ENCODE measurements at regions of chrX and their contacts with region 1.

Region 1: DNA sequence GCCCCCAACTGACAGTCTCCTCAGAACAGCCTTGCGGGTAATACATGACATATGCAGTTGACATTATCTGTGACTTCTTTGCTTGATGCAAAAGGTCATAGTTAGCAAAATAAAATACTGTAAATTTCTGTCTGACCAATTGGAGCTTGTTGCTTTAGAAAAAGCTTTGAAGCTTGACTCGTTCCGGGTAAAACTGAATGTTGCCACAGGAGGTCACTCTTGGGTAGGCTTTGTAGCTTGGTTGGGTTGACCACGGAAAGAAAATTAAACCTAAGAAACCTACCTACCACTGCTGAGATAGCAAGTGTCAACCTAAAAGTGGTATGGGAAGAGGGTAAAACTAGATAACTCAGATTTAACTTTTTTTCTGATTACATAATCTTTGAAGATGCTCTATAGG is 23.2 kb downstream of the PRPS2 start:
- DNase-seq: peak in 6 of 9 experiments; percentile 12 to 62 (median 30)
- ATAC-seq: peak; percentile 58
- H3K4me3 ChIP-seq: no peak overlapping the region
- H3K4me3 Mint-ChIP-seq: no peak overlapping the region
- H3K27ac ChIP-seq: no peak overlapping the region
- H3K27ac Mint-ChIP-seq: no peak overlapping the region
- H3K4me1 ChIP-seq: no peaks in the 10 kb centered on the region
- H3K4me1 Mint-ChIP-seq: no peaks in the 10 kb centered on the region
- H3K27me3 ChIP-seq: no peaks in the 10 kb centered on the region
- H3K27me3 Mint-ChIP-seq: no peaks in the 10 kb centered on the region
- CTCF ChIP-seq: peak; percentile 28

Region 2: DNA sequence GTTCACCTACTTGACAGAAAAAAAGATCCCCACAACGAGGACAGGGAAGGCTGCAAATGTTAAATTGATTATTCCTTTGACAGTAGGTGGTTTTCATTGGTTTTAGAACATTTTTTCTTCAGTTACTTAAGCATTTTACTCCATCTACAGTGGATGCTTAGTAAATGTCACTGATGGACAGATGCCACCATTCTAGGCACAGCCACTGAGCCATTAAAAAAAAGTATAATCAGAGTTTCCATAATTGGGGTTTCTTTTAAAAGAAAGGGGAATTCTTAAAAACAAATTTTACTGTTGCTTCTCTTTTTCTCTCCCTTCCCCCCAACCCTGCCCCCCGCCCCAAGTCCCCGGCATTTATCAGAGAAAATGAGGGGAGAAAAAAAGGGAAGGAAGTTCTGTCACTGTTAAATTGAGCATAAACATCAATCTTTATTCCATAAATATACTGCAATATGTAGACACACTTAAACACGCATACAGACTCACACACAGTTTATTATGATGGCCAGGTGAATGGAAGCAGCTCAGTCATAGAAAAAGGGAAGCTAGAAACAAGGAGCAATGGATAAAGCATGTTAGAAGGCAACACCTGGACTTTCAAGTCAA is 102.9 kb before region 1 on chrX:
- CTCF ChIA-PET with region 1: no interaction called
- POLR2A ChIA-PET with region 1: no interaction called
- intact Hi-C with region 1: no loop called
- DNase-seq: no peak
- ATAC-seq: no peak
- H3K4me3 ChIP-seq: no peak overlapping the region
- H3K4me3 Mint-ChIP-seq: no peak overlapping the region
- H3K27ac ChIP-seq: no peak overlapping the region
- H3K27ac Mint-ChIP-seq: no peak overlapping the region
- H3K4me1 ChIP-seq: no peaks in the 10 kb centered on the region
- H3K4me1 Mint-ChIP-seq: no peaks in the 10 kb centered on the region
- H3K27me3 ChIP-seq: no peaks in the 10 kb centered on the region
- H3K27me3 Mint-ChIP-seq: no peaks in the 10 kb centered on the region
- CTCF ChIP-seq: no peak

Region 3: DNA sequence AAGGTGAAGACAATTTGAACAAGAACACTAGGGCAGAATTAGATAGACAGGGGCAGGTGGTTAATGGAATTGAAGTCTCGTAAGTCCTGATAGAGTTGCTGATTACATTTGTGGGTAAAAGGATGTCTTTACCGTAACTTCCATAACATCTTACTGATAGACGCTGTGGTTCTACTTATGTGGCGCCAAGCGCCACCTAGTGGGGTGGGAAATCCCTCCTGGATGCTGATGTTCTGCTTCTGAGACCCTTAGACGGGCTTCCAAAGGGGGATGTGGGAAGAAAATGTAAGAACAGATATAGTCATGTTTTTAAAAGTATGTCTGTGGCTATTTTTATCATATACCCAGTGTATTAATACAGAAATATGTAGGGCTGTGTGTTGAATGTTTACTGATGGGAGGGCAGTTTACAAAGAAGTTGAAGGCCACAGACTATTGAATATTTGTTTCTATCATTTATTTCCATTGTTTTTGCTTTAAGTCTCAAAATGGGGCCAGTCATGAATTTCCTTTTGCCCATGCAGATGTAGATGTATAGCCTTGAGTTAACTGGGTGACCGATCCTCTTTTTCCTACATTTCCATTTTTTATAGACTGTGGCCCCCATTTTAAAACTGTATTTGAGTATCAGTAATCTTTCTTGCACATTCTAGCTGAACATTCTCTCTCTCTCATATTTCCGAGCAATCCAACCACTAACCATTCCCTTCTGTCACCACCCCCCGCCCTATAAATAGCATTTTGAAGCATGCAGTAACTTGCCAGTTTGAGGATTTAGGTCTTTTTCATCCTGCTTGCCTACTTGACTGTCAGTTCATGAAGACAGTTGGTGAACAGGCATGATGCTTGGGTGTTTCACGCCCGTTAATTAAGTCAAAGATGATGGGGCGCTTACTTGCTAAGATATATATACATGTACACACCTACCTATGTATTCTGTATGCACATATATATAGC is 79.9 kb after region 1 on chrX:
- CTCF ChIA-PET with region 1: interaction called, 13 read pairs
- POLR2A ChIA-PET with region 1: no interaction called
- intact Hi-C with region 1: loop called (anchors 1 kb)
- DNase-seq: peak; percentile 4 to 64 (median 40)
- ATAC-seq: peak; percentile 49
- H3K4me3 ChIP-seq: no peak overlapping the region
- H3K4me3 Mint-ChIP-seq: no peak overlapping the region
- H3K27ac ChIP-seq: no peak overlapping the region
- H3K27ac Mint-ChIP-seq: peak overlapping the region; percentile 24
- H3K4me1 ChIP-seq: peaks cover 3% of the 10 kb centered on the region
- H3K4me1 Mint-ChIP-seq: peaks cover 25% of the 10 kb centered on the region
- H3K27me3 ChIP-seq: no peaks in the 10 kb centered on the region
- H3K27me3 Mint-ChIP-seq: no peaks in the 10 kb centered on the region
- CTCF ChIP-seq: peak; percentile 56

Region 4: GRCh38 chrX:12901486-12901885 is 87.1 kb after region 1 on chrX:
- CTCF ChIA-PET with region 1: interaction called, 13 read pairs
- POLR2A ChIA-PET with region 1: no interaction called
- intact Hi-C with region 1: no loop called
- DNase-seq: peak; percentile 25 to 78 (median 61)
- ATAC-seq: peak; percentile 59
- H3K4me3 ChIP-seq: no peak overlapping the region
- H3K4me3 Mint-ChIP-seq: no peak overlapping the region
- H3K27ac ChIP-seq: no peak overlapping the region
- H3K27ac Mint-ChIP-seq: no peak overlapping the region
- H3K4me1 ChIP-seq: no peaks in the 10 kb centered on the region
- H3K4me1 Mint-ChIP-seq: peaks cover 2% of the 10 kb centered on the region
- H3K27me3 ChIP-seq: no peaks in the 10 kb centered on the region
- H3K27me3 Mint-ChIP-seq: no peaks in the 10 kb centered on the region
- CTCF ChIP-seq: peak; percentile 35

Region 5: DNA sequence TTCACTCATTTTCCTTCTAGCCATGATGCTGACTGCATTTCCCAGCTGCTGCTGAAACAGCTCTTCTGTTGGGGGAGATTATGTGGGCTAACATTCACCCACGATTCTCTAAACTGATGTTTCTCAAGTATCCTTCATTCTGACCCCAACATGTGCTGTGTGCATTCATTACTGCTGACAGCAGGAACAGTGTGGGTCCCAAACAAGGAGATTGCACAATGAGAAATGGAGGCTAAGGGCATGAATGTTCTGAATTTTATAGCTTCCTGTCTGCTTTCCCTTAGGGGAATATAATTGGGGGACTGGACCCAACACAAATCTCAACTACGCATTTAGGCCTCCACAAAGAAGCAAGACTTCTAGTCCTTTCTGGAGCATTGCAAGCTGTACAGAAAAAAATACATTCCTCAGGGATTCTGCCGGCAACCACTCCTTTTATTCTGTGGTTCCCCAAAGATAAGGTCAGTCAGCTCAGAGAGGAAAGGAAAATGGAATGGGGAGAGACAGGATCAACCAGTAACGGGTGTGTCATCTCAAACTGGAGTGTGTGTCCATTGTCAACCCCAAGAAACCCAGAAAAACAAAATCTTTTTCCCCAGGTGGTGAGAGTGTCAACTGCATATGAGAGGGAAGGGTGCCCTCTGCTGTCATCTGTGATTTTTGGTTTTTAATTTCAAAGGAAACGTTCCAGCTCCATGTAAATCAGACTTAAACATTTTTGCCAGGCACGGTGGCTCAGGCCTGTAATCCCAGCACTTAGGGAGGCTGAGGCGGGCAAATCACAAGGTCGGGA is 673.5 kb after region 1 on chrX:
- CTCF ChIA-PET with region 1: interaction called, 7 read pairs
- POLR2A ChIA-PET with region 1: no interaction called
- intact Hi-C with region 1: loop called in 1 of 2 experiments (anchors 2 kb)
- DNase-seq: peak in 8 of 9 experiments; percentile 8 to 75 (median 44)
- ATAC-seq: peak; percentile 78
- H3K4me3 ChIP-seq: no peak overlapping the region
- H3K4me3 Mint-ChIP-seq: no peak overlapping the region
- H3K27ac ChIP-seq: peak overlapping the region in 1 of 2 experiments; percentile 43
- H3K27ac Mint-ChIP-seq: peak overlapping the region; percentile 84
- H3K4me1 ChIP-seq: peaks cover 20% of the 10 kb centered on the region
- H3K4me1 Mint-ChIP-seq: peaks cover 42% of the 10 kb centered on the region
- H3K27me3 ChIP-seq: no peaks in the 10 kb centered on the region
- H3K27me3 Mint-ChIP-seq: no peaks in the 10 kb centered on the region
- CTCF ChIP-seq: peak; percentile 56

Region 6: GRCh38 chrX:13646154-13646549 is 831.7 kb after region 1 on chrX:
- CTCF ChIA-PET with region 1: no interaction called
- POLR2A ChIA-PET with region 1: no interaction called
- intact Hi-C with region 1: loop called in 1 of 2 experiments (anchors 5 kb)
- DNase-seq: peak in 5 of 9 experiments; percentile 20 to 48 (median 31)
- ATAC-seq: no peak
- H3K4me3 ChIP-seq: no peak overlapping the region
- H3K4me3 Mint-ChIP-seq: no peak overlapping the region
- H3K27ac ChIP-seq: no peak overlapping the region
- H3K27ac Mint-ChIP-seq: peak overlapping the region; percentile 64
- H3K4me1 ChIP-seq: no peaks in the 10 kb centered on the region
- H3K4me1 Mint-ChIP-seq: peaks cover 14% of the 10 kb centered on the region
- H3K27me3 ChIP-seq: no peaks in the 10 kb centered on the region
- H3K27me3 Mint-ChIP-seq: no peaks in the 10 kb centered on the region
- CTCF ChIP-seq: no peak

Measured in CD8-positive, alpha-beta T cell (primary cell).